Activated CD4-positive, alpha-beta T cell treated with anti-CD3 and anti-CD28 coated beads, Interleukin-2, amount 10 ng/mL, durations not matched to agents 24 days and 14 days (primary cell): ENCODE measurements at regions of chr9 and their contacts with region 1.

Region 1: DNA sequence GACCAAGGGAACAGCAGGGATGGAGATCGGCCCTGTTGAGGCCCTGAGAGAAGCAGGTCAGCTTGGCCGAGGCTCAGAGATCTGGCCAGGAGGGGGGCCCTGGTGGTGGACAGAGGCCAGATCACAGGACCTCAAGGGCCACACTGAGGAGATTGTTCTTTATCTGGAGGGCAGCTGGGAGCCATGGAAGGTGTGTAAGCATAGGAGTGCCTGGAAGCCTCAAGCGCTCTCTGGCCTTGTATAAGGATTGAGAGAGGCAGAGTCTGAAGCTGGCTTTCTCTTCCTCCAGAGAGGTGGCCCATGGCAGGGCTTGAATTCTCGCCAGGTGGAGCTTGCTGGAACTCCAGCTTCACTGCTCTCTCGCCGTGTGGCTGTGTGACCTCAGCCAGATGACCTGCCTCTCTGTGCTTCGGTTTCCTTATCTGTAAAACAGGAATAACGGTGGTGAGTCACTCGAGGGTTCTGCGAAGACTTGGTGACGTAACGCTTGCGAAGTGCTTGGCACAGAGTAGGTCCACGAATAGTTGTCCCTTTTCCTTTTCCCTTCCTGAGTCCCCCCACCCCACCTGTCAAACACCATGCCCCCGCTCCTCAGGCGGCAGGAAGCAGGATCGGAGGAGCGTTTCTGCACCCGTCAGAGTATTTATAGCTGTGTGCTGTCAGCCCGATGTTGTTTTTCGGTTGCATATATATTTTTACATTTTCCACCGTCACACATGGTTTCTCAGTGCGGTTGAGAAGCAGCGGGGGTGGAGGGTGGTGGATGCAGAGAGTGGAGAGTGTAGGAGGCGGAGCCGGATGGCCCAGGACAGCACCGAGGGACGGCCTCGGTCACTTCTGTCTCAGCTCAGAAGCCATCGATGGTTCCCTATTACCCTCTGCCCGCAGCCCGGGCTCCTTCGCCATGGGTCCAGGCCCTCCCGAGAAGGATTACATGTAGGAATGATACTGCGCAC is 17.0 kb upstream of the CRB2 start:
- DNase-seq: peak; percentile 89
- H3K4me3 Mint-ChIP-seq: peak overlapping the region; percentile 80
- H3K27ac Mint-ChIP-seq: peak overlapping the region; percentile 97
- H3K4me1 Mint-ChIP-seq: peaks cover 43% of the 10 kb centered on the region
- H3K27me3 Mint-ChIP-seq: no peaks in the 10 kb centered on the region

Region 2: GRCh38 chr9:122904823-122905710 is 433.9 kb before region 1 on chr9 and contains the start of gene RC3H2:
- intact Hi-C with region 1: loop called (anchors 1 kb)
- DNase-seq: peak; percentile 99
- H3K4me3 Mint-ChIP-seq: peak within 1 kb of the TSS; percentile 95
- H3K27ac Mint-ChIP-seq: peak within 1 kb of the TSS; percentile 96
- H3K4me1 Mint-ChIP-seq: peaks cover 19% of the 10 kb centered on the region
- H3K27me3 Mint-ChIP-seq: no peaks in the 10 kb centered on the region
- total RNA-seq, gene RC3H2: 39.7 and 40.2 TPM in 2 replicates

Region 3: DNA sequence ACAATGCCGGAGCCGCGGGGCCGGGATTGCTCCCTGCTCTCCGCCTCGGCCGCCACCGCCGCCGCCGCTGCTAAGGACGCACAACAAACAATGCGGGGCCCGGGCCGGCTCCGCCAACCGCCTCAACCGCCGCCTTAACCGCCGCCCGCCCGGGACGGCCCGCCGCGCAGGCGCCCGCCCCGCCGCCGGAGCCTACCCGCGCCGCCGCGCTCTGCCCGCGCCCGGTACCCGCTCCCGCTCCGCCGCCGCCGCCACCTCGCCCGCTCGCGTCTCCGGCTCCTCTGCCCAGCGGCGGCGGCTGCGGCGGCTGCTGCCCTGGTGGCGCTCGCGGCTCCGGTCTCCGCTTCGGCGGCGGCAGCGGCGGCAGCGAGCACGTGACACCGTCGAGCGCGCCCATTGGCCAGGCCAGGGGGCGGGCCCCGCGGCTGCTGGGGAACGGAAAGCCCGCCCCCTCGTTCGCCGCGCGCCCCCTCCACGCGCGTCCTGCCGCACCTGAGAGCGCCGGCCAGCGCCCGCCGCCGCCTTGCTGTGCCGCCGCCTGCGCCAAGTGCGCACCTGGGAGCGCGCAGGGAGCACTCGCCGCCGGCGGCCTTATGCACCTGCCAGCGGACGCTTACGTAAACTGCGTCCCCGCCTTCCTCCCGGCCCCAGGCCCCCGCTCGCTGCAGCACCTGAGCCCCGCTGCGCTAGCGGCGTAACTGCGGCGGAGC is 70.6 kb before region 1 on chr9 and contains the start of gene STRBP:
- intact Hi-C with region 1: loop called (anchors 1 kb)
- DNase-seq: peak; percentile 98
- H3K4me3 Mint-ChIP-seq: peak within 1 kb of the TSS; percentile 78
- H3K27ac Mint-ChIP-seq: peak within 1 kb of the TSS; percentile 50
- H3K4me1 Mint-ChIP-seq: peaks cover 29% of the 10 kb centered on the region
- H3K27me3 Mint-ChIP-seq: peaks cover 13% of the 10 kb centered on the region
- total RNA-seq, gene STRBP: 25.1 and 25.8 TPM in 2 replicates

Region 4: DNA sequence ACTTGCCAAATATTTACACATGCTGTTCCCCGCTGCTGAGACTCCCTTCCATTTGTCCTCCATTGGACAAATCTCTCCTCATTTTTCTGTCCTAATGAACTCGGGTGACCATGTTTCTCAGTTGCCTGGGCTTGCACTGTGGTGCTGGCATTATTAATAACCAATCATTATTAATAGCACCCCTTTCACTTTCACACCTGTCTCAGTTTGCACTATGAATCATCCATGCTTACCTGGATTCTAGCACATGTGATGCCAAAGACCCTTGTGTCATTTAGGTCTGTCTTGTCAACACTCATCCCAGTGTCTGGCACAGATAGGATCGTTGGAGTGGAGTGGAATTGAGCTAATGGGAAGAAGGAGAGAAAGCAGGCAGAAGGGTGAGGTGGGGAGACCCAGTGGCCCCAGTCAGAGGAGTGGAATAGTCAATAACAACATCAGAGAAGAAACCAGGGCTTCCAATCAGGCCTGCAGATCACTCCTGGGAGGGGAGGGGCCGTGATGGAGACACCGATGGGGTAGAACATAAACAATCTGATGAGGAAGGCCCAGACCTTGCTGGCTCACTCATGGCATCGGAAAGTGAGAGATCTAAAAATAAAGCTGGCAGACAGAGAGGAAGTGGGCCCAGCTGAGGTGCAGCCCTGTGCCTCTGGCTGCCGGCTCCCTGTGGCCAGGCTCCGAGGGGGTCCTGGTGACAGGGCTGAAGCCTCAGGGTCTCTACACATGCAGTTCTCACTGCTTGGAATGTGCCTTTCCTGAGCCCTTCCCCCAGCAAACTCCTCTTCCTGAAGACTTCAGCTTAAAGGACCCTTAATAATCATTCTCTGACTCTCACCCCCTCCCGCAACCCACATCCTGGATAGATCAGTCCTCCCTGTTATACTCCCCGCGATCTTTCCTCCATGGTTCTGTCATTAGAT is 16.5 kb before region 1 on chr9:
- intact Hi-C with region 1: loop called (anchors 1 kb)
- DNase-seq: peak; percentile 86
- H3K4me3 Mint-ChIP-seq: peak overlapping the region; percentile 62
- H3K27ac Mint-ChIP-seq: peak overlapping the region; percentile 84
- H3K4me1 Mint-ChIP-seq: peaks cover 37% of the 10 kb centered on the region
- H3K27me3 Mint-ChIP-seq: no peaks in the 10 kb centered on the region